GM18951 (cell line): ENCODE measurements at regions of chr4 and their contacts with region 1.

Region 1: GRCh38 chr4:6732441-6733357 is 16.7 kb downstream of the BLOC1S4 start:
- POLR2A ChIP-seq: no peak

Region 2: GRCh38 chr4:6768539-6768905 is 35.8 kb after region 1 on chr4:
- in situ Hi-C with region 1: no loop called
- POLR2A ChIP-seq: no peak

Region 3: DNA sequence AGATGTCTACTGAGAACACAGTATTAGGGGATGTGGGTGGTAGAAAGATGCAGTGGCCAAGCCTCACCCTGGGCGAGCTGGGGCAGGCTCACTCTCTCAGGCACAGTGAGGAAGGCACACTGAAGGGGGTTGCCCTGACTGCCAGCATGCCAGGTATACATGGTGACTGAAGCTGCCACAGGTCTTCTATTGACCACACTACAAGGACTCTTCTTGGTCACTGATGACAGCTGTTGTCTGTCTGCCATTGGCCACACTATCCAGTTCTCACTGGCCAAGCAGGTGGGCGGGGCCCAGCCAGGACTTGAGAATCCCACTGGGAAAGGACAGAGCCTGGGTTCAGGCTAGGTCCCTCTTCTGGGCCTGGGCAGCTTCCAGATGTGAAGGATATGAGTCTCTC is 137.2 kb after region 1 on chr4:
- in situ Hi-C with region 1: loop called (anchors 10 kb)
- POLR2A ChIP-seq: no peak

Region 4: GRCh38 chr4:7089213-7089986 is 356.7 kb after region 1 on chr4:
- in situ Hi-C with region 1: no loop called
- POLR2A ChIP-seq: no peak